Endothelial cell of umbilical vein (primary cell): ENCODE measurements at regions of chr21 and their contacts with region 1.

Region 1: GRCh38 chr21:34073032-34073869 is at the starts of genes MRPS6 and SLC5A3:
- DNase-seq: peak; percentile 81
- H3K4me3 ChIP-seq: peak within 1 kb of the TSS; percentile 79 to 83 (median 80)
- H3K27ac ChIP-seq: peak within 1 kb of the TSS; percentile 65
- H3K4me1 ChIP-seq: peaks cover 10% of the 10 kb centered on the region
- H3K27me3 ChIP-seq: peaks cover 0 to 1% of the 10 kb centered on the region in 2 experiments
- CTCF ChIP-seq: no peak
- POLR2A ChIP-seq: peak; percentile 88
- total RNA-seq, gene MRPS6: 35.5 and 37.2 TPM in 2 replicates
- total RNA-seq, gene SLC5A3: 6.8 and 8.0 TPM in 2 replicates

Region 2: DNA sequence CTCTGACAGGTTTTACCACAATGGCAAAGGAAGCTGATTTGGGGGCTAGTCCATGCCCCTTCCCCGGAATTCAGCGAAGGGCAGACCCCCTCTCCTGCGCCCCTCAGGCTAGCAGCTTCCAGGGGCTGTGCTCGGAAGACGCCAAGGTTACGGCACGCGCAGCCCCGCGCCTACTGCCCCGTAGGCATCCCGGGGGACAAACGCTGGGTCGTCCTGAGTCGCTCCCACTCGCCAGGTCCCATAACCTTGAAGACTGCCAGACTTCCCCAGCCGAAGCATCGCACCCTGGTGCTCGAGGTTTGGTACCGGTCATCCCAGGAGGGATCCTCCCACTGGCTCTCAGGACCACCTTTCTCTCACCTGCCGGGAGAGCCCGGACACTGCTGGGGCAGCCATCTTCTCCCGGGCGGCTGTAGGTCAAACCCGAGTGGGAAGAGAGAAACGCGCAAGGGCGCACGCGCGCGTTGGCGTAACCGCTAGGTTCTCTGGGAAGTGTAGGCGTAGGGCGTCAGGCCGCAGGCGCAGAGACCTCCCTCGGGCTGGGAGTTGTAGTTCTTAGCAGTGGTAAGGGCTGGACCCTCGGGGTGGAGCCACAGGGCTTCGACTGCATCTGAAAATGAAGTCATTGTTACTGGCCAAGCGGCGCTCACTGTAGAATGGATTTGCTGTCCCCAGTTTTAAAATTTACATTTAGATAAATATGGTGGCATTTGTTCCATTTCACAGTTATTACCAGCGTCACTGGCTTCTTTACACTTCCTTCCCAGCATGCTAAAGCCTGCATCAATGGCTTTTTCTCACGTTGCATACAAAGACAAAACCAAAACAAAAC is 157.7 kb before region 1 on chr21 and contains the start of gene ATP5PO:
- CTCF ChIA-PET with region 1: no interaction called
- POLR2A ChIA-PET with region 1: no interaction called
- dilution Hi-C with region 1: no loop called
- intact Hi-C with region 1: loop called (anchors 2 kb)
- DNase-seq: peak; percentile 99
- H3K4me3 ChIP-seq: peak within 1 kb of the TSS; percentile 15 to 98 (median 83)
- H3K27ac ChIP-seq: peak within 1 kb of the TSS; percentile 34
- H3K4me1 ChIP-seq: peaks cover 13% of the 10 kb centered on the region
- H3K27me3 ChIP-seq: no peaks in the 10 kb centered on the region
- CTCF ChIP-seq: no peak
- POLR2A ChIP-seq: peak; percentile 93
- total RNA-seq, gene ATP5PO: 187 and 190 TPM in 2 replicates

Region 3: DNA sequence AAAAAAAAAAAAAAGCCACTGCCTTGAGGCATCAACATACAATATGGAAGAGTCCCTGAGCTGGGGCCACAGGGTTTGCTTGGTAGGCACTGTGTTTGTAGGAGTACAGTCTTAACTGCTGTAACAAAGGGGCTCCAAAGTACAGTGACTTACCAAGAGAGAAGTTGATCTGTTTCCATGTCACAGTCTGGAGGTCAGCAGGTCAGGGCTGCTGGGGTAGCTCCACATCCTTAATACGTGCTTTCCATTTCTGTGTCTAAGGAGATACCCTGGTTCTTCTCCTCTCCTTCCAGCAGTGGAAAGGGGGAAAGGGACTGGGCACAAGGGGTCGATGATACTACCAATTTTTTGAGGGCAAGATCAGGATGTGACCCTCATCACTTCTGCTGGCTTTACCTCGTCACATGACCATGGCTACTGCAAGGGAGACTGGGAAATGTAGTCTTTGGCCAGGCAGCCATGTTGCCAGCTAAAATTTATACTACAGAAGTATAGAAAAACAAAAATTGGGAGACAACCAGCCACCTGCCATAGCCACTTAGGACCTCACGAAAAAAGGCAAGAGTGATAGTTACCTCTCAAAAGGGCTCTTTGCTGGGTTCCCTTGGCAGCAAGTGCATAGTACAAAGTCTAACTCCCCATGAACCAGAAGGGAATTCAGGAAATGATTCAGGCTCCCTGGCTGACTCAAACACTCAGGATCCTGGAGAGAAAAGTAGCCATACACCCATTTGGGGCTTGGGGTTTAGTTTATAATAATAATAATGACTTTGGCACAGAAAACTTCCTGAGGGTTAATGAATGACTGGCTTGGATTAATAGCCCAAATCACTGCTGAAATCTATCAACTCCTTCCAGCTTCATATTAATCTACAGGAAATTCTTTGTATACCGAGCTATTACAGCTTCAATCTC is 104.9 kb before region 1 on chr21:
- CTCF ChIA-PET with region 1: interaction called, 6 read pairs
- POLR2A ChIA-PET with region 1: interaction called, 8 read pairs
- dilution Hi-C with region 1: no loop called
- intact Hi-C with region 1: loop called (anchors 1 kb)
- DNase-seq: peak; percentile 97
- H3K4me3 ChIP-seq: peak overlapping the region in 1 of 3 experiments; percentile 10
- H3K27ac ChIP-seq: peak overlapping the region; percentile 84
- H3K4me1 ChIP-seq: peaks cover 36% of the 10 kb centered on the region
- H3K27me3 ChIP-seq: peaks cover 0 to 3% of the 10 kb centered on the region in 2 experiments
- CTCF ChIP-seq: no peak
- POLR2A ChIP-seq: no peak

Region 4: DNA sequence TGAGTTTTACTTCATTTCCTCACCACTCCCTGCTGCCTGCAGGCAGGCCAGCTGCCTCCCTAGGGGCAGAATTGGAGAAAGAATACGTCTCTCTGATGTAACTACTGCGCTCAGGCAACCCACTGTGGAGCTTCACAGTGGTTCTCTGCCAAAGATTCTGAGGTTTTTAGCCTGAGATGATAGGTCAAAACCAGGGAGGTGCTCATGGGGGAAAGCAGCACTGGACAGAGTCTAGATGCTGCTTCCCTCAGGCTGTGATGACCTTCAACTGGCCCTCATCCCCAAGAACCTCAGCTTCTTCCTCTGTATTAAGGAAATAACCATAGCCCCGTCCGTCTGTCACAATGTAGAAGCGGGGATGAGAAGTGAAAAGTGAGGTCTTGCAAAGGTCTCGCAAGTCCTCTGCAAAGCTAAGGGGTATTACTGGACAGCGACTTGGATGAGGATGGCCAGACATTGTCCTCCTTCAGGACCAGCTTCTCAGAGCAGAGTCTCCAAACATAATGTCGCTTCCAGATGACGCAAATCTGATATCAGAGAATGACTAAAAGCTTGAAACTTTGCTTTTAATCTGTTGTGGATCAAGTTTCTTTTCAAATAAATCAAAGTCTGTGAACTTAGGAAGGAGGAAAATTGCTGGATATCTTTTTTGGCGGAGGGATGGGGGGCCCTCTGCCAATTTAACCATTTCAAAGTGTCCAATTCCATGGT is 91.7 kb before region 1 on chr21:
- CTCF ChIA-PET with region 1: no interaction called
- POLR2A ChIA-PET with region 1: no interaction called
- dilution Hi-C with region 1: no loop called
- intact Hi-C with region 1: no loop called
- DNase-seq: no peak
- H3K4me3 ChIP-seq: no peak overlapping the region
- H3K27ac ChIP-seq: no peak overlapping the region
- H3K4me1 ChIP-seq: no peaks in the 10 kb centered on the region
- H3K27me3 ChIP-seq: no peaks in the 10 kb centered on the region
- CTCF ChIP-seq: no peak
- POLR2A ChIP-seq: no peak

Region 5: DNA sequence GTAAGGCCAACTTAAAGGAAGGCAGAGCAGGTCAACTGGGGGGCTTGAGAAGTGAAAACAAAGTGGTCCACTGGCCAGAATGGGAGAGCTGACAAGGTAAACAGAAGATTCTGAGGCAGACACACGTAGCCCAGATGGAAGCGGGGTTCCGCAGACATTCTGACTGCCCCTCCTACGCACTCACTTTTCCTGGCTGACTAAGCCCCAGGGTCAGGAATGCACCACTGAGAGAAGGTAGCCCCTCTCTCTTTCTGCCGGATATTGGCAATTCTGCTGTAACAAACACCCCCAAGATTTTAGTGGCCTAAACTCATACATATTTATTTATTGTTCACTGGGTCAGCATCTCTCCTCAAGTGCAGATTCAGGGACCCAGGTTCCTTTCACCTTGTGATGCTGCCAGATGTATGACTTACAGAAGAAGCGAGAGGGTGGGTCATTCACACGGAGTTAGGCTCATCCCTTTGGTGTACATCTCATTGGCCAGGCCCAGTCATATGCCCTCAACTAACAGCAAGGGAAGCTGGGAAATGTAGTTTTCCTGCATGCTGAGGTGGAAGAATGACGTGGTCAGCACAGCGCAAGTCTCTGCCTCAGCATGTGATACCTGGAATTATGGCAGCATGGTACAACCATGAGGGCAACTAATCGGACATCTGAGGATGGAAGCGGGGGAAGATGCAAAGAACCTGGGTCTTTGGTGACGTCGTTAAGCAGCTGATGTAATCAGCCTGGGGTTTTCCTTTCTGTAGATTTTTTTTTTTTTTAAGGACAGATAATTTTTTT is 43.3 kb before region 1 on chr21:
- CTCF ChIA-PET with region 1: no interaction called
- POLR2A ChIA-PET with region 1: no interaction called
- dilution Hi-C with region 1: no loop called
- intact Hi-C with region 1: loop called (anchors 1 kb)
- DNase-seq: peak; percentile 85
- H3K4me3 ChIP-seq: no peak overlapping the region
- H3K27ac ChIP-seq: no peak overlapping the region
- H3K4me1 ChIP-seq: no peaks in the 10 kb centered on the region
- H3K27me3 ChIP-seq: peaks cover 0 to 4% of the 10 kb centered on the region in 2 experiments
- CTCF ChIP-seq: no peak
- POLR2A ChIP-seq: no peak

Region 6: GRCh38 chr21:34091607-34092006 is 18.4 kb after region 1 on chr21:
- CTCF ChIA-PET with region 1: interaction called, 18 read pairs
- POLR2A ChIA-PET with region 1: no interaction called
- dilution Hi-C with region 1: no loop called
- intact Hi-C with region 1: no loop called
- DNase-seq: peak; percentile 16
- H3K4me3 ChIP-seq: no peak overlapping the region
- H3K27ac ChIP-seq: no peak overlapping the region
- H3K4me1 ChIP-seq: peaks cover 16% of the 10 kb centered on the region
- H3K27me3 ChIP-seq: no peaks in the 10 kb centered on the region
- CTCF ChIP-seq: peak; percentile 20 to 27
- POLR2A ChIP-seq: no peak

Region 7: GRCh38 chr21:34202553-34203372 is 129.5 kb after region 1 on chr21:
- CTCF ChIA-PET with region 1: interaction called, 10 read pairs
- POLR2A ChIA-PET with region 1: no interaction called
- dilution Hi-C with region 1: no loop called
- intact Hi-C with region 1: loop called (anchors 5 kb)
- DNase-seq: no peak
- H3K4me3 ChIP-seq: peak overlapping the region in 1 of 3 experiments; percentile 46
- H3K27ac ChIP-seq: no peak overlapping the region
- H3K4me1 ChIP-seq: peaks cover 6% of the 10 kb centered on the region
- H3K27me3 ChIP-seq: peaks cover 0 to 7% of the 10 kb centered on the region in 2 experiments
- CTCF ChIP-seq: no peak
- POLR2A ChIP-seq: no peak

Region 8: DNA sequence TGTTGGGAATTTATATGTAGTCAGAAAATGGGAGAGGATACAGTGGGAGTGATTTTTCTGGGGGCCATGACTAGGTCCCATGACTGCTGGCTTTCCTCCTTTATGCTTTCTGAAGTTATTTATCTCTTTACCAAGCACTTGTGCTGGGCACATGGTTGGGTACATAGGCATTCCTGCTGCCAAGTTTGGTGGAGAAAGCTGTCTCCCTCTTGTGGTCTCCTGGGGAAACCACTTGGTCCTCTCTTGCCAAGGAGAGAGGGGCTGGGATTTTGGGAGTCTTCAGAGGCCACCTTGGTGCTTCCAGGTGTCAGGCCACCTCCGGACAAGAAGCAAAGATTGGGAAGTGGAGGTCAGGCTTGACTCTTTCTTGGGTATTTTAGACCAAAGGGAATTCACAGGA is 170.3 kb after region 1 on chr21:
- CTCF ChIA-PET with region 1: no interaction called
- POLR2A ChIA-PET with region 1: no interaction called
- dilution Hi-C with region 1: no loop called
- intact Hi-C with region 1: loop called (anchors 5 kb)
- DNase-seq: peak; percentile 31
- H3K4me3 ChIP-seq: no peak overlapping the region
- H3K27ac ChIP-seq: no peak overlapping the region
- H3K4me1 ChIP-seq: no peaks in the 10 kb centered on the region
- H3K27me3 ChIP-seq: peaks cover 2 to 5% of the 10 kb centered on the region in 2 experiments
- CTCF ChIP-seq: peak; percentile 53 to 62
- POLR2A ChIP-seq: no peak